ENCODE measurements at regions of chr12 and their contacts with region 1.

Region 1: GRCh38 chr12:55001198-55001868 is 16.8 kb upstream of the TESPA1 start:
- DNase-seq: no peak
- H3K4me3 ChIP-seq: no peak overlapping the region
- H3K27ac ChIP-seq: no peak overlapping the region
- H3K4me1 ChIP-seq: no peaks in the 10 kb centered on the region
- H3K27me3 ChIP-seq: peaks cover 6% of the 10 kb centered on the region
- CTCF ChIP-seq: no peak
- EP300 ChIP-seq: no peak
- POLR2A ChIP-seq: no peak

Region 2: GRCh38 chr12:55132816-55133215 is 131.5 kb after region 1 on chr12:
- in situ Hi-C with region 1: no loop called
- intact Hi-C with region 1: loop called (anchors 10 kb)
- DNase-seq: no peak
- H3K4me3 ChIP-seq: no peak overlapping the region
- H3K27ac ChIP-seq: no peak overlapping the region
- H3K4me1 ChIP-seq: no peaks in the 10 kb centered on the region
- H3K27me3 ChIP-seq: peaks cover 9% of the 10 kb centered on the region
- CTCF ChIP-seq: no peak
- EP300 ChIP-seq: no peak
- POLR2A ChIP-seq: no peak

Region 3: GRCh38 chr12:55445357-55445756 is 444.0 kb after region 1 on chr12:
- in situ Hi-C with region 1: no loop called
- intact Hi-C with region 1: no loop called
- DNase-seq: no peak
- H3K4me3 ChIP-seq: no peak overlapping the region
- H3K27ac ChIP-seq: no peak overlapping the region
- H3K4me1 ChIP-seq: no peaks in the 10 kb centered on the region
- H3K27me3 ChIP-seq: no peaks in the 10 kb centered on the region
- CTCF ChIP-seq: no peak
- EP300 ChIP-seq: no peak
- POLR2A ChIP-seq: no peak

Measured in transverse colon (tissue), 4 donors.